ENCODE measurements at regions of chr4 and their contacts with region 1.

Region 1: GRCh38 chr4:54228056-54228527 is 1.0 kb upstream of the PDGFRA start:
- DNase-seq: peak; percentile 81
- CTCF ChIP-seq: peak; percentile 86

Region 2: DNA sequence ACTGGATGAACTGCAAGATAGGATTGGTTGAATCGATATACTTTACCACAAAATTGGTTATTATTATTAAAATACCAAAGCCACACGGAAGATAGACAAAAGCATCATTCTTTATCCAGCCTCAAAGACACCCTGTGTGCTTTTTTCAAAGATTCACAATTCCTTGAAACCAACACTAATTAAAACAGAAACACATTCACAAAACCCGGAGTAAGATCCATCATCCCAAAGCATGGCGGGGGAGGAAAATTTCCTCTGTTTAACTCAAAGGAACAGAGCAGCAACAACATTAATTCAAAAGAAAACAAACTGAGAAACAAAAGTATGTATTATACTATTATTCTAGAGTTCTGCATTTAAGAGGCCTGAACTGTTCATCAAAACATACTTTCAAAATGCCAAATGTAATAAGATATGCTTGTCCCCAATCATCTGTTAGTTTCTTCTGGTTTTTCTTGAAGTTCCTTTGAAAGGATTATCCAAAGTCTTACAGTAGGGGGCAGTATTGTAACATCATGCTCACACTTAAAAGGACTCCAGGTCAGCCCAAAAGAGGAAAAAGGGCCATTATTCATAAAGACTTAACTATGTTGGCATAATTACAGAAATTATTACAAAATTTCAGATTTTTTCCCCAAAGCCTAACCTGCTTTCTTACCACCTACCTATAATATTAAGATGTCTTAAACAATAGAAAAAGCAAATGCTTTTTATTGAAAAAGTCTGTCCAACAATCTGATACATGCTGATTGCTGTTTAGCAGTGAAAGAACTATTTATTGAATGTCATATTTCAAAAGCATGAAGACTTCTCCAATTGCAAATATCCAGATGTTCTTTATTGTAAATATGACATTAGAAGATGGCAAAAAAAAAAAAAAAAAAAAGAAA is 1031.0 kb before region 1 on chr4:
- in situ Hi-C with region 1: loop called (anchors 10 kb)
- DNase-seq: peak; percentile 37
- CTCF ChIP-seq: peak; percentile 43

Region 3: DNA sequence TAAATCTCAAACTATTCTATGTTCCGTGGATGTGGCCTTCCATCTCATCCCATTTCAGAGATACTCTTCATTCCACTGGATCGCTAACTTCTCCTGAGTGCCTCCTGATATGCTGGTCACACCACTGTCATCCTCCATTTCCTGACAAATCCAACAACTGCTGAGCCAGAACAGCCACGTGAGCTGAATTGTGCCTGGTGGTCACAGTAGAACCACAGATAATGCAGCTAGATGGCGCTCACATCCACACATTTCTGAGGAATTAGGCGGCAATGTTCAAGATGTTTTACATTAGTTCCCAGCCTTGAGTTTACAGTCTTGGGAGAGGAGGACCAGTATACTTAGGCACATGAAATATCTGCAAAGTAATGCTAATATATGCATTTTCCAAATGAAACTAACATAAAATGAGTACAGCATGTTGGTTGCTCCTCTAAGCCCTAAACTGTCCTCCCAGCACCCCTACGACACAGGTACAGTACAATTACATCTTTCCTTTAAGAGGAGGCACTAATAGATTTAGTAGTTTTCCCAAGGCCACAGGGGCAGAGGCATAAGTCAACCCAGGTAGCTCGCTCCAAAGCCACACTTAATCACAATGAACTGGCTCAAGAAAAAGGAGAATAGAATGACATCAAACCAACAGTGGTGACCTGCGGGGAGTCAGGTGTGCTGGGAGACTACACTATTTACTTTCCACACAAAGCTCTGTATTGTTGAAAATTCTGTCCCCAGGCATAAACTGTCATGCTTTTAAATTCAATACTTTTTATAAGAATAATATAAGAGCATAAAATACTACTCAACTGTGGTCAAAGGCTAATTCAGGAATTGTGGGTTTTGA is 297.9 kb before region 1 on chr4:
- in situ Hi-C with region 1: loop called (anchors 10 kb)
- DNase-seq: peak; percentile 61
- CTCF ChIP-seq: peak; percentile 72

Region 4: DNA sequence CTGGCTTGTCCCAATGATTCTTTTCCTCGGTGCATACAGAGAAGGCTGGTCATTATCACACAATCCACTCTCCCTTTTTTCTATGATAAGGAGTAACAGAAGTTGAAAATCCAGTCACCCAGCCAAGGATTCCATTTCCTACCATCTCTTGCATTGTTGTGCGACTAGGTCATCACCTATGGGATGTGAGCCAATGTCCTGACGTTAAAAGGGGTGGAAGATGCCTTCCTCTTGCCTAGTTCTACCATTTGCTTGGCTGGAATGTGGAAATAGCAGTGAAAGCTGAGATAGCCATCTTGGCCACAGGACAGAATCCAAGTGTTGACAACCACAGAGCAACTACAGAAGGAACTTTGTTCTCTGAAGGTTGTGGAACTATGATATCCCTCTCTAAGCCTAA is 297.5 kb after region 1 on chr4:
- in situ Hi-C with region 1: no loop called
- DNase-seq: no peak
- CTCF ChIP-seq: no peak